ENCODE measurements at regions of chr22 and their contacts with region 1.

Region 1: GRCh38 chr22:37792494-37792893 is 15.2 kb upstream of the GCAT start:
- DNase-seq: no peak
- ATAC-seq: no peak
- H3K4me3 ChIP-seq: no peak overlapping the region
- H3K27ac ChIP-seq: no peak overlapping the region
- H3K4me1 ChIP-seq: no peaks in the 10 kb centered on the region
- CTCF ChIP-seq: no peak
- EP300 ChIP-seq: no peak
- POLR2A ChIP-seq: no peak
- RAD21 ChIP-seq: no peak

Region 2: GRCh38 chr22:37599153-37599552 is 193.3 kb before region 1 on chr22:
- CTCF ChIA-PET with region 1: no interaction called
- POLR2A ChIA-PET with region 1: no interaction called
- DNase-seq: peak in 1 of 2 experiments; percentile 51
- ATAC-seq: no peak; a peak in 2 of 6 replicates
- H3K4me3 ChIP-seq: no peak overlapping the region
- H3K27ac ChIP-seq: peak overlapping the region; percentile 4 to 35; a peak in 3 of 6 replicates
- H3K4me1 ChIP-seq: peaks cover 14% of the 10 kb centered on the region
- CTCF ChIP-seq: no peak
- EP300 ChIP-seq: no peak
- POLR2A ChIP-seq: no peak
- RAD21 ChIP-seq: no peak

Region 3: GRCh38 chr22:37781479-37781911 is 11.0 kb before region 1 on chr22:
- CTCF ChIA-PET with region 1: interaction called, 24 read pairs
- POLR2A ChIA-PET with region 1: no interaction called
- DNase-seq: peak in 1 of 2 experiments; percentile 47
- ATAC-seq: peak; percentile 66 to 77; a peak in 5 of 6 replicates
- H3K4me3 ChIP-seq: no peak overlapping the region
- H3K27ac ChIP-seq: peak overlapping the region in 1 of 2 experiments; percentile 65; a peak in 3 of 6 replicates
- H3K4me1 ChIP-seq: peaks cover 22% of the 10 kb centered on the region
- CTCF ChIP-seq: peak; percentile 7; the same call in 1 of the 3 replicates
- EP300 ChIP-seq: no peak
- POLR2A ChIP-seq: no peak
- RAD21 ChIP-seq: peak; percentile 17 to 33; a peak in 2 of 5 replicates

Region 4: GRCh38 chr22:37910890-37911743 is 118.6 kb after region 1 on chr22:
- CTCF ChIA-PET with region 1: no interaction called
- POLR2A ChIA-PET with region 1: no interaction called
- DNase-seq: no peak
- ATAC-seq: no peak
- H3K4me3 ChIP-seq: no peak overlapping the region
- H3K27ac ChIP-seq: no peak overlapping the region
- H3K4me1 ChIP-seq: peaks cover 12% of the 10 kb centered on the region; the same call in 2 of the 3 replicates
- CTCF ChIP-seq: no peak
- EP300 ChIP-seq: no peak
- POLR2A ChIP-seq: no peak
- RAD21 ChIP-seq: no peak

Region 5: DNA sequence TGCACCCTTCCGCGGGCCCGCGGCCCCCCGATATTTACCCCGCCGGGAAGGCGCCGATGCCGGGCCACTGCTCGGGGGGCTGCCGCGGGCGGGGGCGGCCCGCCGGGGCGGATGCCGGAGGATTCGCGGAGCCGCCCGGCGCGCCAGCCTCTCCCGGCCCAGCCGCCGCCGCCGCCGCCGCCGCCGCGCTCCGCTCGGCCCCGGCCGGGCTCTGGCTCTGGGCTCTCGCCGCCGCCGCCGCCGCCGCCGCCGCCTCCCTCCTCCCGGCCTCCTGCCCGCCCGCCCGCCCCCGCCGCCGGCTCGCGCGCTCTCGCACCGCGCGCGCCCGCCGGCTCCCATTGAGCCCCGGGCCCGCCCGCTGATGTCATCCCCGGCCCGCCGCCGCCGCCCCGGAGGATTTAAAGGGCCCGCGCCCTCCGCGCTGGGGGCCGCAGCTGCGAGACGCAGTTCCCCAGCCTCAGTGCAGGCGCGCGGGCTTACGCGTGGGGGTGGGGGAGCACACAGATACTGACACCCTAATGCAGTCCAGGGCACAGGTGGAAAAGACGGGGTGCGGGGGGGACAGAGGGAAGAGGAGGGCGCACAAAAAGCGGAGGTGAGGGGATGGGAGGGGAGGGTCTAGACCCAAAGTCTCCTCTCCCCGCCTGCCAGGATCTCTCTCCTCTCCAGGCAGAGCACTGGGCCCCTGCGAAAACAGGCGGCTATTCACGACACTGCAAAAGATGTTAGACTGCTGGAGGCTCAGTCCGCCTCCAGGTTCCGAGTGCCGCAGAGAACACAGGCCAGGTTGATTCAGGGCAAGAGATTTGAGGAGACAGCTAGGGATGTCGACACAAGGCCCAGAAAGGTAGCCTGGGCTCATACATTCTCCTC is 524.9 kb after region 1 on chr22 and contains the start of gene CSNK1E:
- CTCF ChIA-PET with region 1: no interaction called
- POLR2A ChIA-PET with region 1: no interaction called
- DNase-seq: peak; percentile 44 to 51
- ATAC-seq: peak; percentile 41 to 42
- H3K4me3 ChIP-seq: peak within 1 kb of the TSS; percentile 76
- H3K27ac ChIP-seq: peak within 1 kb of the TSS; percentile 92 to 99
- H3K4me1 ChIP-seq: peaks cover 48% of the 10 kb centered on the region
- CTCF ChIP-seq: no peak
- EP300 ChIP-seq: no peak
- POLR2A ChIP-seq: no peak
- RAD21 ChIP-seq: no peak
- polyA plus RNA-seq, gene CSNK1E: 58.3 and 60.9 TPM in 2 replicates

Measured in A549 (cell line).